HCT116 (cell line): ENCODE measurements at regions of chr17 and their contacts with region 1.

Region 1: DNA sequence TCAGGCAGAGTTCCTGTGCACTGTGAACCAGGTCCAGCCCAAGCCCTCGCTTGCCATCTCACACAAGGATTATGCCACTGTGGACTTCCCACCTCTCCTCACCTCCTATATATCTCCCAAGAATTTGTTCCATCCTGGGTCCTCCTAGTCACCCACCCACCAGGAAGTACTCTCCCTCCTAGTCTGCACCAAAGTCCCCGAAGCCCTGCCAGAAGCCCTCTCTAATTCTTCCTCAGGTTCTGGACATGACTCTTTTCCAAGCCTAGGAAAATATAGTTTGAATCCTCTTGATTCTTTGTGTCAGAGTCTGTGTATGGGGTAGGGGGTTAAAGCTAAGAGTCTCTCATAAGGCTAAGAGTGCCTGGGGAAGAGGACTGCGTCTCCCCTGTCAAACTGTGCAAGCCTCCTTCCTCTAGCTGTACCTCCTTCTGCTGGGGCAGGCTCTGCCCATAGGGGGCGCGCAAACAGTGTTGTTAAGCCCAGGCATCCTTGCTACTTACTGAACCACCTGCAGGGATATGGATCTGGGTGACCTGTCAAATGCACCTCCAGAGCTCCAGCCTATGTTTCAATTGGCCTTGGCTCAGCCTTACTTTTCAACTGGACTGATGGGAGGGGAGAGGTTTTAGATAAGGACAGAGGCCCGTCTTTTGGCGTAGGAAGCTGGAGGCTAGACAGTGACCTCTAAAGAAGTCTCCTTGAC is 16.6 kb upstream of the DLX4 start:
- DNase-seq: peak; percentile 76
- ATAC-seq: peak; percentile 97
- H3K4me3 ChIP-seq: no peak overlapping the region
- H3K27ac ChIP-seq: no peak overlapping the region
- H3K4me1 ChIP-seq: peaks cover 20 to 29% of the 10 kb centered on the region in 2 experiments
- H3K27me3 ChIP-seq: no peaks in the 10 kb centered on the region; the same call in 1 of the 2 replicates
- CTCF ChIP-seq: peak; percentile 92 to 100 (median 100)
- POLR2A ChIP-seq: no peak
- RAD21 ChIP-seq: peak; percentile 96

Region 2: DNA sequence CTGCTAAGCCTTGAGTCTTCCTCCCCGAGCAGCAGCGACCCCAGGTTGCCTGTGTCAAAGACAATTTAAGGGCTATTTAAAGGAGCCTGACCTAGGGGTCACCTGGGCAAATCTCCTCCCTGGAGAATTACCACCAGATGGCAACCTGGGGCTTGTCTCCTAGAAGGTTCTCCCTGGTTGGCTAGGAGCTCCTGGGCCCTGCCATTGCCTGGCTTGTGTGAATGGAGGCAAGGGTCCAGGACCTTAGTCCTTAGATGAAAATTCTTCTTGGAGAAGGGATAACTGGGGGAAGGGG is 53.2 kb before region 1 on chr17:
- CTCF ChIA-PET with region 1: interaction called, 14 read pairs
- POLR2A ChIA-PET with region 1: no interaction called
- RAD21 ChIA-PET with region 1: interaction called in 1 of 2 experiments, 4 read pairs
- intact Hi-C with region 1: no loop called
- DNase-seq: peak; percentile 48
- ATAC-seq: peak; percentile 73
- H3K4me3 ChIP-seq: no peak overlapping the region
- H3K27ac ChIP-seq: no peak overlapping the region
- H3K4me1 ChIP-seq: peaks cover 28 to 40% of the 10 kb centered on the region in 2 experiments
- H3K27me3 ChIP-seq: peaks cover 7% of the 10 kb centered on the region; the same call in 1 of the 2 replicates
- CTCF ChIP-seq: peak; percentile 58 to 71 (median 62)
- POLR2A ChIP-seq: no peak
- RAD21 ChIP-seq: peak; percentile 85

Region 3: GRCh38 chr17:49926886-49927285 is 25.5 kb before region 1 on chr17:
- CTCF ChIA-PET with region 1: interaction called, 22 read pairs
- POLR2A ChIA-PET with region 1: no interaction called
- RAD21 ChIA-PET with region 1: no interaction called
- intact Hi-C with region 1: no loop called
- DNase-seq: no peak
- ATAC-seq: no peak
- H3K4me3 ChIP-seq: no peak overlapping the region
- H3K27ac ChIP-seq: no peak overlapping the region
- H3K4me1 ChIP-seq: peaks cover 13 to 38% of the 10 kb centered on the region in 2 experiments
- H3K27me3 ChIP-seq: no peaks in the 10 kb centered on the region
- CTCF ChIP-seq: no peak
- POLR2A ChIP-seq: no peak
- RAD21 ChIP-seq: no peak

Region 4: DNA sequence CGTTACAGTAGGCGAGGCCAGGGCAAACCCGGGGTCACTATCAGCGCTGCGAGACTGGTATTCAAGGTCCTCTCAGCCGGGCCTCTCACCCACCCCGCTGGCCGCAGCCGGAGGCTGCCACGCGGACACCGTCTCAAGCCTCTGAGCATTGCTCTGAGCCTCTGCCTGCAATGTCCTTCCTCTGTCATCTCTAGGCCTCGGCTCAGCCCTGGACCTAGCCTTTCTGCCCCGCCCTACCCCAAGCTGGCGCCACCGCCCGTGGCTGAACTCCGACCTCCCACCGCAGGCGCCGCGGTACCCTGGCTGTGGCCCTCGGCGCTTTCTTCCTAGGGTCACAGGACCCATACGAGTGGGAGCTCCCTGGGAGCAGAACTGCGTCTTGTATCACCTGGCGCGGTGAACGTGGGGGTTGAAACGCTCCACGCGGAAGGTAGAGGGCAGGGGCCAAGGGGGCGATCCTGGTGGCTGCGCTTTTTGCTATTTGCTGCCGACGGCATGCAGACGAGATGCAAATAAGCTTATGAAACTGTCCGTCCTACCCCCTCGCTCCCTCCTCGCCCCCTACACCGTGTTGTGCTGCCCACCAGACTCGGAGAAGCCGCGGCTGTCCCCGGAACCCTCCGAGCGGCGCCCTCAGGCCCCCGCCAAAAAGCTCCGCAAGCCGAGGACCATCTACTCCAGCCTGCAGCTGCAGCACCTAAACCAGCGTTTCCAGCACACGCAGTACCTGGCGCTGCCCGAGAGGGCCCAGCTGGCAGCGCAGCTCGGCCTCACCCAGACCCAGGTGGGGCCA is 20.3 kb after region 1 on chr17:
- CTCF ChIA-PET with region 1: interaction called, 18 read pairs
- POLR2A ChIA-PET with region 1: no interaction called
- RAD21 ChIA-PET with region 1: no interaction called
- intact Hi-C with region 1: no loop called
- DNase-seq: no peak
- ATAC-seq: no peak
- H3K4me3 ChIP-seq: no peak overlapping the region
- H3K27ac ChIP-seq: no peak overlapping the region
- H3K4me1 ChIP-seq: peaks cover 14 to 36% of the 10 kb centered on the region in 2 experiments; a peak in 3 of 4 replicates
- H3K27me3 ChIP-seq: peaks cover 1% of the 10 kb centered on the region; the same call in 1 of the 2 replicates
- CTCF ChIP-seq: no peak
- POLR2A ChIP-seq: no peak
- RAD21 ChIP-seq: no peak

Region 5: GRCh38 chr17:49987681-49988441 is 35.5 kb after region 1 on chr17:
- CTCF ChIA-PET with region 1: interaction called, 13 read pairs
- POLR2A ChIA-PET with region 1: no interaction called
- RAD21 ChIA-PET with region 1: no interaction called
- intact Hi-C with region 1: no loop called
- DNase-seq: no peak
- ATAC-seq: peak; percentile 48
- H3K4me3 ChIP-seq: no peak overlapping the region
- H3K27ac ChIP-seq: no peak overlapping the region
- H3K4me1 ChIP-seq: peaks cover 4 to 9% of the 10 kb centered on the region in 2 experiments; a peak in 2 of 4 replicates
- H3K27me3 ChIP-seq: peaks cover 12% of the 10 kb centered on the region; the same call in 1 of the 2 replicates
- CTCF ChIP-seq: no peak
- POLR2A ChIP-seq: no peak
- RAD21 ChIP-seq: no peak